Calu3 (cell line): ENCODE measurements at regions of chr12 and their contacts with region 1.

Region 1: GRCh38 chr12:56468216-56469006 is at the start of gene SPRYD4:
- DNase-seq: peak; percentile 96
- H3K4me3 Mint-ChIP-seq: peak within 1 kb of the TSS; percentile 89
- H3K27ac Mint-ChIP-seq: peak within 1 kb of the TSS; percentile 96
- H3K4me1 Mint-ChIP-seq: peaks cover 9% of the 10 kb centered on the region
- H3K27me3 Mint-ChIP-seq: no peaks in the 10 kb centered on the region
- CTCF ChIP-seq: no peak
- total RNA-seq, gene SPRYD4: 6.1 and 6.6 TPM in 2 replicates

Region 2: DNA sequence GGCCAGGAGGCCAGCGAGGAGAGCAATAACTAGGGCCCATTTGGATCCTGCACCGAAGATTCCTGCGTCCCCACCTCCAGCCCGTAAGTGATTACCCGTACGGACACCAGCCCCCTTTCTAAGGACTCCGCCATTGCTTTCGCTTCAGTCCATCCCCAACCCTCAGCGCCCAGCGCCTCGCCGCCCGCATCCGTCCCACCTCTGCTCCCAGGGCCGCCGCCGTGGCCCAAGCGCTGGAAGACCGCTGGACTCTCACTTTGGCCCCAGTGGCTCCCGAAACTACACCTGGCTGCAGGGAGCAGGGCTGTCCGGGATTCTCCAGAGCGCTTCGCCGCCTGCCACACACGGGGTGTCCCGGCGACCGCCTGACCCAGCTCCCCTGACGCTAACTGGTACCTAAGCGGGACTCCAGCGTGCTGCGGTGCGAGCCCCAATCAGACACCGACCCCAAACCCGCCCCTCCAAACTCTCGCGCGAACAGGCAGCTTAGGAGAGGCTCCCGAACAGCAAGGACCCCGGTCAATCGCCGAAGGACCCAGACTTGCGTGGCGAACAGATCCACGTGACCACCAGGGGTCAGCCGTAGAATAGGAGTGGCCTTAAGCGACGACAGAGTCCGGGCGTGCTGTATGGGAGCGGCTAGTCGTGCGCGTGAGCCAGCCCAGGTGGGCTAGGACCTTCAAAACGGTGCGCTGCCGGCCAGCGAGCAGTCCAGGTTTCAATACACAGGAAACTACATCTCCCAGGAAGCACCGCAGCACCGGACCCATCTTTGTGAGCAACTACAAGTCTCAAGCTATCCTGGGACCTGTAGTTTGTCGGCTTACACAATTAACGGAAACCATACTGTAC is 152.6 kb before region 1 on chr12 and contains the start of gene CNPY2:
- CTCF ChIA-PET with region 1: interaction called, 22 read pairs
- intact Hi-C with region 1: loop called (anchors 1 kb)
- DNase-seq: peak; percentile 98
- H3K4me3 Mint-ChIP-seq: peak within 1 kb of the TSS; percentile 100
- H3K27ac Mint-ChIP-seq: peak within 1 kb of the TSS; percentile 99
- H3K4me1 Mint-ChIP-seq: no peaks in the 10 kb centered on the region
- H3K27me3 Mint-ChIP-seq: no peaks in the 10 kb centered on the region
- CTCF ChIP-seq: no peak
- total RNA-seq, gene CNPY2: 228 and 236 TPM in 2 replicates

Region 3: GRCh38 chr12:57238854-57239554 is 770.6 kb after region 1 on chr12:
- CTCF ChIA-PET with region 1: no interaction called
- intact Hi-C with region 1: no loop called
- DNase-seq: peak; percentile 94
- H3K4me3 Mint-ChIP-seq: peak overlapping the region; percentile 82
- H3K27ac Mint-ChIP-seq: peak overlapping the region; percentile 40
- H3K4me1 Mint-ChIP-seq: peaks cover 30% of the 10 kb centered on the region
- H3K27me3 Mint-ChIP-seq: peaks cover 51% of the 10 kb centered on the region
- CTCF ChIP-seq: peak; percentile 100